Right ventricle myocardium superior (tissue), 1 donor: ENCODE measurements at regions of chr11 and their contacts with region 1.

Region 1: GRCh38 chr11:72446902-72447769 is 12.8 kb upstream of the CLPB start:
- DNase-seq: no peak
- ATAC-seq: peak; percentile 76

Region 2: DNA sequence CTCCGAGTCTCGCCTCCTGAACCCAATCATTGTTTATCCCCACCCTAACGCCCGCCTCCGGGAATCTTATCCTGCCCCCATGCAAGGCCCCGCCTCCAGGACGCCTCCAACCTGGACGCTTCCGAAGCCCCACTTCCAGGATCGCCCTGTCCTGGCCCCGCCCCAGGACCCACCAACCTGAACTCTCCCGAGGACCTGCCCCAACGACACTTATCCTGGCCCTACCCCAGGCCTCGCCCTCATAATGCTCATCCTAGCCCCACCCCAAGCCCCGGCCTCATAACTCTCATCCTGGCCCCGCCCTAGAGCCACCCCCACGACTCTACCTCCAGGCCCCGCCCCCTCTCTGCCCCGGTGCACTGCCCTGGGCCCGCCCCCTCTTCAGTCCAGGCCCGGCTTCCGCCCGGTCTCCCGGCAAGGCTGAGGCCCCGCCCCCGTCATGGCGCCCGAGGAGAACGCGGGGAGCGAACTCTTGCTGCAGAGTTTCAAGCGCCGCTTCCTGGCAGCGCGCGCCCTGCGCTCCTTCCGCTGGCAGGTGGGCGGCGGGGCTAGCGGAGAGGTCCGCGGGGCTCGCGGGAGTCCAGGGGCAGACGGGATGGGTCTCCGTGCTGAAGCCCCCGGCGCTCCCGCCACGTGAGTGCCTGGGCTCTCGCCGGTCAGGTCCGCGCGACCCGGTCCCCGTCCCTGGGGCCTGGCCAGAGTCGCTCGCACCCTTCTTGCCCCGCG is 659.9 kb before region 1 on chr11:
- intact Hi-C with region 1: loop called (anchors 10 kb)
- DNase-seq: peak; percentile 96
- ATAC-seq: peak; percentile 100